ENCODE measurements at regions of chr6 and their contacts with region 1.

Region 1: DNA sequence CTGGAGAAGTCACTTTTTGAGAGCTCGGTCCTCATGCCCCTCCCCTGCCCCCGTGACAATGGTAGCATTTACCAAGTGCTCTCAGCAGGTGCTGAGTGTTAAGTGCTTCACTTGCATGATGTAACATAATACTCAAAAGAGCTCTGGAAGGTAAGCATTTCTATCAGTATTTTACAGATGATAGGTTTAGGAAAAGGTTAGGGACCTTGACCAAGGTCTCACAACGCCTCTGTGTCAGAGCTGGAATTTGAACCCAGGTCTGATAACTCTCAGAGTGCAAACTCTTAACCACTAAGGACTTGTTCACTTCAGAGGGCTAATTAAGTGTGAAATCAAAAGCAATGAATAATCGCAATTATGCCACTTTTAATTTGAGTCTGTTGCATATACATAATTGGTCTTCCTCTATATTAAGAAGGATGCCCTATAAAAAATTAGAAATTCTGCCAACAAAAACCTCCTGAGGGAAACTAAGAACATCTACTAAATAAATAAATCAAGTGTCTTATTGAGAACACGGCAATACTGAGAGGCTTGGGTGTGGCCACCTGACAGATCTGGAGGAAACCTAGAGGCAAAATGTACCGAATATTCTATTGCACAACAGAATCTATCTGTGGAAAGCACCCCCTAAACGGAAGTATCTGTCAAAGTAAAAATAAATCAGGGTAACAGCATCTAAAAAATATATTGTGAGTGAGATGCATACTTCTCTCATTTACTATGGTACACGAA is 109.8 kb downstream of the BACH2 start:
- DNase-seq: peak; percentile 75
- H3K4me3 Mint-ChIP-seq: peak overlapping the region; percentile 86
- H3K27ac Mint-ChIP-seq: peak overlapping the region; percentile 89
- H3K4me1 Mint-ChIP-seq: peaks cover 71% of the 10 kb centered on the region
- H3K27me3 Mint-ChIP-seq: no peaks in the 10 kb centered on the region

Region 2: DNA sequence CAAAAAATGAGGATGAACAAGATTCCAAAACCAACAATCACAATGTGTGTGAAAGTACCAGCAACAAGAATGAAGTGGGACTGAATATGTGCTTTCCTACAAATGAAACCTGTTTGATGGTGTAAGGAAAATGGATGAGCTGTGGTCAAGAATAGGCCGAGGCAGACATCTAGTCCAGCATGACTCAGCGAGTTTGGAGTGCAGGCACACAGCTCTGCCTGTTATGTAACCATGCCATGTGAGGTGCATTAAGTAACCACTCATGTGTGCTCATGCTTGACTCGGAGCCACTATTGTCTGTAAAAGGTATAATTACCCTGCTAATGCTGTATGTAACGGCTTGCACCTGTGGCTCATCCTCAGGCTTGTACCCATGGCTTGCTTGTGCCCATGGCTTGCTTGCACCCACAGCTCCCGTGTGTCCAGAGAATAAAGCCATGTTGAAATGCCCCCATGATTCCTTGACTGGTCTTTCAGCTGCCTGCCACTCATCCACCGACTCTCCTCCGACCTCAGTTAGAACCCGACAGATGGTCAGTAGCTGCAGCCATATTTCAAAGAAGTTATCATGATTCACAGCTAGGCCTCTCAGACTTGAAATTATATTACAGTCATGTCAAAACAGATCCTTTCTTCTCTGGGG is 11.2 kb after region 1 on chr6:
- intact Hi-C with region 1: loop called (anchors 2 kb)
- DNase-seq: peak; percentile 58
- H3K4me3 Mint-ChIP-seq: no peak overlapping the region
- H3K27ac Mint-ChIP-seq: no peak overlapping the region
- H3K4me1 Mint-ChIP-seq: peaks cover 47% of the 10 kb centered on the region
- H3K27me3 Mint-ChIP-seq: no peaks in the 10 kb centered on the region

Region 3: GRCh38 chr6:90406142-90406794 is 219.5 kb after region 1 on chr6:
- intact Hi-C with region 1: no loop called
- DNase-seq: peak; percentile 77
- H3K4me3 Mint-ChIP-seq: peak overlapping the region; percentile 12
- H3K27ac Mint-ChIP-seq: peak overlapping the region; percentile 82
- H3K4me1 Mint-ChIP-seq: peaks cover 67% of the 10 kb centered on the region
- H3K27me3 Mint-ChIP-seq: no peaks in the 10 kb centered on the region